ENCODE measurements at regions of chr11 and their contacts with region 1.

Region 1: DNA sequence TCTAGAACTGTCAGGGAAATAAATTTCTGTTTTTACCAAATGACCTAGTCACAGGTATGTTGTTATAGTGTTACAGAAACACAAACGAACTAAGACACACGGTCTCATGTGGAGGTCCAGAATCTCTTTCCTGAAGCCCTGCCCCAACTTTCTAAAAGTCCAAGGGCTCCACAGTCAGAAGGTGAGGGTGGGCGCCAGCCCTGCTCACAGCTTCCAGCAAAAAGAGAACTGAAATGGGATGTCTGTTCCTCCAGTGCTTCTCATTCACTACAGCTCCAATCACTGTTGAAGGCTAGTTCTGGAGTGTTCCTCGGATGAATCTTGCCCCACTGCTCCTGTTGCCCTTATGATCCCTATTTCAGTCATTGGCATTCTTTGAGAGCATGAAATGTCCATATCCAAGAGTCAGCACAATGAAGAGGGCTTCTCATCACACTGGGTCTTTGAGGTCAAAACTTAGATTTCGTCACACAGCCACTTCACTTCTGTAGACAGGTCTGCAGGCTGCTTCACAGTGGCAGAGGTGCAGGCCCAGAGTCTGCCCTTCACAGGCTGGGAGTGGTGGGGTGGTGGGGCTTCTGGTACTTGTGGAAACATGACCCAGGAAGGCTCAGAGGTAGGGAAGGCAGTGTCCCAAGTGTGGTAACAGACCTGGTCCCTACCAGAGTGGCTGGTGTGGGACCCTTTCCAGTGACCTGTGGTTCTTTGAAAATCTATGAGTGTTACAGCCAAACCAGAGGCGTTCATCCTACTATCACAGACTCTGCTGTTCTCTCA is 34.9 kb downstream of the FAM181B start:
- DNase-seq: no peak
- H3K4me3 ChIP-seq: no peak overlapping the region
- H3K27ac ChIP-seq: no peak overlapping the region
- H3K4me1 ChIP-seq: no peaks in the 10 kb centered on the region
- H3K27me3 ChIP-seq: peaks cover 8% of the 10 kb centered on the region
- CTCF ChIP-seq: no peak
- POLR2A ChIP-seq: no peak

Region 2: GRCh38 chr11:81644239-81644840 is 1054.4 kb before region 1 on chr11:
- intact Hi-C with region 1: loop called in 1 of 2 experiments (anchors 5 kb)
- DNase-seq: peak; percentile 17 to 53 (median 34)
- H3K4me3 ChIP-seq: no peak overlapping the region
- H3K27ac ChIP-seq: no peak overlapping the region
- H3K4me1 ChIP-seq: no peaks in the 10 kb centered on the region
- H3K27me3 ChIP-seq: peaks cover 4% of the 10 kb centered on the region
- CTCF ChIP-seq: peak; percentile 61 to 76 (median 71)
- POLR2A ChIP-seq: no peak

Region 3: GRCh38 chr11:82494988-82495432 is 203.8 kb before region 1 on chr11:
- intact Hi-C with region 1: loop called in 1 of 2 experiments (anchors 10 kb)
- DNase-seq: peak in 1 of 7 donors; percentile 6
- H3K4me3 ChIP-seq: no peak overlapping the region
- H3K27ac ChIP-seq: no peak overlapping the region
- H3K4me1 ChIP-seq: no peaks in the 10 kb centered on the region
- H3K27me3 ChIP-seq: no peaks in the 10 kb centered on the region
- CTCF ChIP-seq: peak; percentile 23 to 54 (median 40)
- POLR2A ChIP-seq: no peak

Region 4: DNA sequence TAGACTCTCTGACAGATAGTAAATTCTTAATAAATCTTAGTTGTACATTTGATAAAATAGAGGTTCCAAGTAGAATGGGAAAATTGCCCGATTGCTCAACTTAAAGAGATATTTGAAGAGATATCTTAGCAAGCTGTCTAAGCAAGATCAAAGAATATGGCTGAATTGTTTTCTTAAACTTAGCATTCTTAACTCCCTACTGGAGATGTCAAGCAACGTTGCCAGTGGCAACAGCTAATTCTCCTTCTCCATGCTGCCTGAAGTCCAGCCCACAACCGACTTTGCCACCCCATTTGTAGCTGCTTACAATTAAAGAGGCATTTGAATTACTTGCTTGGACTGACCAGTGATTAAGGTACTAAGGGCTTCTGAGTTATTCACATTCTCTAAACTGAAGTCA is 59.5 kb before region 1 on chr11:
- intact Hi-C with region 1: no loop called
- DNase-seq: no peak
- H3K4me3 ChIP-seq: no peak overlapping the region
- H3K27ac ChIP-seq: no peak overlapping the region
- H3K4me1 ChIP-seq: no peaks in the 10 kb centered on the region
- H3K27me3 ChIP-seq: peaks cover 5% of the 10 kb centered on the region
- CTCF ChIP-seq: no peak
- POLR2A ChIP-seq: no peak

Region 5: GRCh38 chr11:82890002-82890341 is 191.2 kb after region 1 on chr11:
- intact Hi-C with region 1: no loop called
- DNase-seq: no peak
- H3K4me3 ChIP-seq: no peak overlapping the region
- H3K27ac ChIP-seq: peak overlapping the region in 3 of 5 donors; percentile 1 to 15 (median 13)
- H3K4me1 ChIP-seq: peaks cover 14 to 26% of the 10 kb centered on the region in 2 donors
- H3K27me3 ChIP-seq: no peaks in the 10 kb centered on the region
- CTCF ChIP-seq: no peak
- POLR2A ChIP-seq: no peak

Region 6: GRCh38 chr11:82900277-82901164 is 201.8 kb after region 1 on chr11 and contains the start of gene PRCP:
- intact Hi-C with region 1: no loop called
- DNase-seq: peak; percentile 94 to 98 (median 97)
- H3K4me3 ChIP-seq: peak within 1 kb of the TSS; percentile 48 to 83 (median 66)
- H3K27ac ChIP-seq: peak within 1 kb of the TSS; percentile 79 to 95 (median 93)
- H3K4me1 ChIP-seq: peaks cover 13 to 29% of the 10 kb centered on the region in 2 donors
- H3K27me3 ChIP-seq: no peaks in the 10 kb centered on the region
- CTCF ChIP-seq: peak in 1 of 6 experiments; percentile 10
- POLR2A ChIP-seq: peak; percentile 86 to 97
- total RNA-seq, gene PRCP: 79.9 to 169 (median 136) TPM